Ovary (tissue), 10 donors: ENCODE measurements at regions of chr5 and their contacts with region 1.

Region 1: GRCh38 chr5:142769741-142770631 is at the start of gene ARHGAP26:
- DNase-seq: peak; percentile 94 to 97 (median 95)
- H3K4me3 ChIP-seq: peak within 1 kb of the TSS; percentile 85
- H3K27ac ChIP-seq: peak within 1 kb of the TSS; percentile 26 to 75
- H3K4me1 ChIP-seq: no peaks in the 10 kb centered on the region
- H3K27me3 ChIP-seq: no peaks in the 10 kb centered on the region
- CTCF ChIP-seq: peak in 2 of 3 donors; percentile 22 to 35
- EP300 ChIP-seq: no peak
- POLR2A ChIP-seq: peak; percentile 99
- total RNA-seq, gene ARHGAP26: 7.1 to 47.1 (median 16.2) TPM

Region 2: DNA sequence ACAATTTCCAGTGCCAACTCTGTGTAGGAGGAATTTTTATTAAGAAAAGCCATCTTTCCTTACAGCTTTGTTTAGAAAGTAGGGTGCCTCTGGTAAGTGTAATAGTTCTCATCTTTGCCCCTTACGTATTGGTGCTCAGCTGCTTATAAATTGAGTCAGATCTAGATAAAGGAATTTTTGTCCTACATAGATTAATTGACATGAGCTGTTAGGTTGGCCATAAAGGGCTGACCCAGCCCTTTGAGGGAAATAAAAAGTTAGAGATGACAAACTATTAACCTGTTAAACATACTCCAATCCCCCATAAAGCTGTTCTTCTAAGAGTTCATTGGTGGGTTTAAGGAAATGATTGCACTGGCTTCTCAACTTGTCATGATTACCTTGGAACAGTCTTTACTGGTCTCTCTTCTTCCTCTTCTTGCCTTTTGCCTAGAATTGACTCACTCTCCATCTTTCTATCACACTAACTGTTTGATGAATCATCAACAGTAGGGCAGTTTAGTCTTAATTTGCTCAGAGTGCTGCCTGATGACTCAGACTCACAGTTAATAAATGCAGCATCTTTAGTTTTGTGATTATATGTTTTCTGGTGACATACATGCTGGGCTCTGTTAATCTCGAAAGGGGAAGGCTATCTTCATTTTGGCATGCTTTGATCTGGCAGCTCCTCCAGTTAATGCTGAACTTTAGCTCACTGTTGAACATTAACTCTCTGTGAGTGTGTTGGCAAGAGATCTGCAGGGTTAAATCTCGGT is 51.9 kb after region 1 on chr5:
- intact Hi-C with region 1: no loop called
- DNase-seq: no peak
- H3K4me3 ChIP-seq: no peak overlapping the region
- H3K27ac ChIP-seq: no peak overlapping the region
- H3K4me1 ChIP-seq: peaks cover 2% of the 10 kb centered on the region
- H3K27me3 ChIP-seq: no peaks in the 10 kb centered on the region
- CTCF ChIP-seq: no peak
- EP300 ChIP-seq: no peak
- POLR2A ChIP-seq: no peak

Region 3: GRCh38 chr5:142888469-142889085 is 118.6 kb after region 1 on chr5:
- intact Hi-C with region 1: loop called in 1 of 4 experiments (anchors 5 kb)
- DNase-seq: peak in 1 of 5 donors; percentile 43
- H3K4me3 ChIP-seq: no peak overlapping the region
- H3K27ac ChIP-seq: no peak overlapping the region
- H3K4me1 ChIP-seq: no peaks in the 10 kb centered on the region
- H3K27me3 ChIP-seq: no peaks in the 10 kb centered on the region
- CTCF ChIP-seq: peak; percentile 26 to 63 (median 62)
- EP300 ChIP-seq: no peak
- POLR2A ChIP-seq: no peak

Region 4: GRCh38 chr5:144276044-144276822 is 1506.2 kb after region 1 on chr5:
- intact Hi-C with region 1: no loop called
- DNase-seq: no peak
- H3K4me3 ChIP-seq: no peak overlapping the region
- H3K27ac ChIP-seq: no peak overlapping the region
- H3K4me1 ChIP-seq: no peaks in the 10 kb centered on the region
- H3K27me3 ChIP-seq: no peaks in the 10 kb centered on the region
- CTCF ChIP-seq: no peak
- EP300 ChIP-seq: no peak
- POLR2A ChIP-seq: no peak